Cardiac septum (tissue), 1 donor: ENCODE measurements at regions of chr11 and their contacts with region 1.

Region 1: DNA sequence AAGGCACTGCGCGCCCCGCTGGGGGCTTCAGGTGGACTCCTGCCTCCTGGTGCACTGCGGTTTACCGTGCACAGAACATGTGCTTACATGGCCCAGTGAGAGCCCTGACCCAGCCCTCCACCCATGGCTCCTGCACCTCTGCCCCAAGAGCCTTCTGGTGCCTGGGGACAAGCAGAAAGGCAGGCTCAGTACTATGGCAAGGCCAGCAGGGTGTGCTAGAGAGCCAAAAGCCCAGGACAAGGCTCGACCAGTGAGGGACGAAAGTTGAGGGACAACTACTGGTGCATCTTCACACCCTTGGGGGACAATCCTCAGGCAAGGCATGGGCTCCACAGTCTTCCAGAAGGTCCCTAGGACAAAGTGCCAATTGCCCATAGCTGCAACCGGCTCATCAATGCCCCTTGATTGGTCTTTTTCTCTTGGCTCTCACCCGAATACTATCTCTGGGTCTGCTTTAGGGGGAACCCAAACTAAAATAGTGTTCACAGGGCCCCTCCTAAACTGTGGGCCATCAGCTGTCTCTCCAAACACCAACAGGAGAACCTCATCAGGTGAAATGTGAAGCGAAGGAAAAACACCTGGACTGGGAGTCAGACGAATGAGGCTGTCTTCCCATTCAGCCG is 13.5 kb downstream of the PGA5 start:
- DNase-seq: no peak

Region 2: GRCh38 chr11:61384271-61385242 is 130.0 kb after region 1 on chr11:
- intact Hi-C with region 1: loop called (anchors 10 kb)
- DNase-seq: no peak